ENCODE measurements at regions of chr17 and their contacts with region 1.

Region 1: DNA sequence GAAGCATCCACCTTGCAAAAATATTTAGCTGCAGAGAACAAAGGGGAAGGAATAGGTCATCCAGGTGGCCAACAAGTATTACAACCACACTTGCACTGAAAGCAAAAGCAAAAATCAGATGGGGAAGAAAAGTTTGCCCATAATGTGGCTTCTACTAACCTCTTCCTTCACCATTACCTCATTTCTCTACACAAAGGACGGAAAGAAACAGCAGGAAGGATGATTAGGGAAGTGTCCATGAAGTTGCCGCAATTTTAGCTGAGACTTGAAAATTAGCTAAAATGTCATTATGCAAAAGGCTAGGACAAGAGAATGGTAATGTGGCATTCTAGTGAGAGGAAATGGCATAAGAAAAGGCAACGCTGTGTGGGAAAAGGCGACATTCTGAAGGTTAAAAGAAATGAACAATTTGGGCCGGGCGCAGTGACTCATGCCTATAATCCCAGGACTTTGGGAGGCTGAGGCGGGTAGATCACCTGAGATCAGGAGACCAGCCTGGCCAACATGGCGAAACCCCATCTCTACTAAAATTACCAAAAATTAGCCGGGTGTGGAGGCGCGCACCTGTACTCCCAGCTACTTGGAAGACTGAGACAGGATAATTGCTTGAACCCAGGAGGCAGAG is 13.7 kb downstream of the KANSL1 start:
- DNase-seq: no peak
- ATAC-seq: peak; percentile 76
- H3K4me3 ChIP-seq: no peak overlapping the region
- H3K4me3 Mint-ChIP-seq: peak overlapping the region; percentile 20 to 98 (median 58)
- H3K27ac ChIP-seq: peak overlapping the region; percentile 26
- H3K27ac Mint-ChIP-seq: peak overlapping the region; percentile 12 to 86 (median 53)
- H3K4me1 ChIP-seq: peaks cover 71 to 77% of the 10 kb centered on the region in 2 donors
- H3K4me1 Mint-ChIP-seq: peaks cover 73 to 100% (median 94%) of the 10 kb centered on the region in 7 donors
- H3K27me3 ChIP-seq: no peaks in the 10 kb centered on the region
- H3K27me3 Mint-ChIP-seq: no peaks in the 10 kb centered on the region

Region 2: GRCh38 chr17:46121841-46122485 is 57.5 kb before region 1 on chr17:
- CTCF ChIA-PET with region 1: no interaction called
- POLR2A ChIA-PET with region 1: no interaction called
- intact Hi-C with region 1: loop called in 1 of 2 experiments (anchors 5 kb)
- DNase-seq: no peak
- ATAC-seq: peak; percentile 54
- H3K4me3 ChIP-seq: no peak overlapping the region
- H3K4me3 Mint-ChIP-seq: peak overlapping the region; percentile 13 to 77 (median 54)
- H3K27ac ChIP-seq: no peak overlapping the region
- H3K27ac Mint-ChIP-seq: peak overlapping the region; percentile 35 to 83 (median 67)
- H3K4me1 ChIP-seq: peaks cover 45 to 60% of the 10 kb centered on the region in 2 donors
- H3K4me1 Mint-ChIP-seq: peaks cover 52 to 96% (median 92%) of the 10 kb centered on the region in 7 donors
- H3K27me3 ChIP-seq: no peaks in the 10 kb centered on the region
- H3K27me3 Mint-ChIP-seq: no peaks in the 10 kb centered on the region

Region 3: GRCh38 chr17:46139432-46140210 is 39.9 kb before region 1 on chr17:
- CTCF ChIA-PET with region 1: interaction called, 4 read pairs
- POLR2A ChIA-PET with region 1: no interaction called
- intact Hi-C with region 1: loop called in 1 of 2 experiments (anchors 5 kb)
- DNase-seq: no peak
- ATAC-seq: no peak
- H3K4me3 ChIP-seq: no peak overlapping the region
- H3K4me3 Mint-ChIP-seq: peak overlapping the region in 9 of 10 donors; percentile 5 to 67 (median 52)
- H3K27ac ChIP-seq: peak overlapping the region; percentile 10
- H3K27ac Mint-ChIP-seq: peak overlapping the region in 8 of 9 donors; percentile 24 to 82 (median 53)
- H3K4me1 ChIP-seq: peaks cover 74 to 82% of the 10 kb centered on the region in 2 donors
- H3K4me1 Mint-ChIP-seq: peaks cover 71 to 98% (median 95%) of the 10 kb centered on the region in 7 donors
- H3K27me3 ChIP-seq: no peaks in the 10 kb centered on the region
- H3K27me3 Mint-ChIP-seq: no peaks in the 10 kb centered on the region

Region 4: GRCh38 chr17:46154151-46154816 is 25.2 kb before region 1 on chr17:
- CTCF ChIA-PET with region 1: interaction called, 4 read pairs
- POLR2A ChIA-PET with region 1: interaction called, 4 read pairs
- intact Hi-C with region 1: loop called in 1 of 2 experiments (anchors 2 kb)
- DNase-seq: peak in 3 of 9 donors; percentile 14 to 44 (median 24)
- ATAC-seq: peak; percentile 58
- H3K4me3 ChIP-seq: peak overlapping the region; percentile 10
- H3K4me3 Mint-ChIP-seq: peak overlapping the region; percentile 57 to 82 (median 70)
- H3K27ac ChIP-seq: peak overlapping the region; percentile 27
- H3K27ac Mint-ChIP-seq: peak overlapping the region; percentile 4 to 87 (median 66)
- H3K4me1 ChIP-seq: peaks cover 87 to 89% of the 10 kb centered on the region in 2 donors
- H3K4me1 Mint-ChIP-seq: peaks cover 78 to 100% (median 90%) of the 10 kb centered on the region in 7 donors
- H3K27me3 ChIP-seq: no peaks in the 10 kb centered on the region
- H3K27me3 Mint-ChIP-seq: no peaks in the 10 kb centered on the region

Region 5: GRCh38 chr17:46212634-46213435 is 33.3 kb after region 1 on chr17:
- CTCF ChIA-PET with region 1: interaction called, 7 read pairs
- POLR2A ChIA-PET with region 1: no interaction called
- intact Hi-C with region 1: loop called in 1 of 2 experiments (anchors 5 kb)
- DNase-seq: peak in 7 of 9 donors; percentile 64 to 83 (median 77)
- ATAC-seq: peak; percentile 92
- H3K4me3 ChIP-seq: no peak overlapping the region
- H3K4me3 Mint-ChIP-seq: peak overlapping the region in 6 of 10 donors; percentile 7 to 35 (median 18)
- H3K27ac ChIP-seq: no peak overlapping the region
- H3K27ac Mint-ChIP-seq: peak overlapping the region in 8 of 9 donors; percentile 46 to 89 (median 80)
- H3K4me1 ChIP-seq: peaks cover 0 to 3% of the 10 kb centered on the region in 2 donors
- H3K4me1 Mint-ChIP-seq: peaks cover 24 to 69% (median 50%) of the 10 kb centered on the region in 7 donors
- H3K27me3 ChIP-seq: no peaks in the 10 kb centered on the region
- H3K27me3 Mint-ChIP-seq: no peaks in the 10 kb centered on the region

Measured in naive thymus-derived CD4-positive, alpha-beta T cell (primary cell).